CD4-positive, alpha-beta T cell (primary cell): ENCODE measurements at regions of chr5 and their contacts with region 1.

Region 1: DNA sequence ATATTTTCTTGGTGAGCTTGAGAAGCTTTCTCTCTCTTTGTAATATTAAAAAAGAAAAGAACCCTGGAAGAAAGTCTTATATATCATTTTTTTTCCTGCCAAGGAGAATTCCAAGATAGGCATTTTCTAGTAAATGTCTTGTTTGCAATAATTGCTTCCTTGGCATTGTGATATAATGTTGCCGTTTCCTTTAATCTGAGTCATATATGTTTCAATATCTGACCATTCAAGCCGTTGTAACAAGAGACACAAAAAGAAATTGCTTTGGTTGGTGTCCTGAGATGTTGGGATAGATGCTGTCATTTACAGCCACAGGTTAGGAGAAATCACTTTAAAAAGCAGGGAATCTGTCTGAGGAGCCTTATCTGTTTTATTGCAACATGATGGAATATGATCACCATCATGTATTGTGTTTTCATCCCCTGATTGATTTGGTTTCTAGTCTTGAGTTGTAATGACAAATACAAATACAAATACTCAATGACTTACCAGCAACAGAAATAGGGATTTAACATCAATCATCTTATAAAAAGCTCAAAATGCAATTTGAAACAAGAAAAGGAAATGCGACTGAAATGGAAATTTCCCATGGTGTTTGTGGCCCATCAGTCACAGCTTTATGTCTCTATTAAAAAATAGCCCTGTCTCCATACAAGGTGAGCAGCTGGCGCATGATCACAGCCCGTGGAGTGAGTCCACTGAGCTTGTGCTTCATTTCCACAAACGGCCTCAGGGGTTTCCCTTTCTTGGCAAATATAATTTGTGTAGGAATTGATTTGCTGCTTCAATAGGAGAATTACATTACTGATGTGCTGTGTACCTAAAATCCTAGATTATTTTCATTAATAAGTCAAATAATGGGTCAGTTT is 250.1 kb upstream of the TRPC7 start:
- DNase-seq: no peak
- ATAC-seq: no peak
- H3K4me3 ChIP-seq: no peak overlapping the region
- H3K4me3 Mint-ChIP-seq: no peak overlapping the region
- H3K27ac ChIP-seq: no peak overlapping the region
- H3K27ac Mint-ChIP-seq: no peak overlapping the region
- H3K4me1 ChIP-seq: no peaks in the 10 kb centered on the region
- H3K4me1 Mint-ChIP-seq: no peaks in the 10 kb centered on the region
- H3K27me3 ChIP-seq: no peaks in the 10 kb centered on the region
- H3K27me3 Mint-ChIP-seq: no peaks in the 10 kb centered on the region
- CTCF ChIP-seq: no peak

Region 2: DNA sequence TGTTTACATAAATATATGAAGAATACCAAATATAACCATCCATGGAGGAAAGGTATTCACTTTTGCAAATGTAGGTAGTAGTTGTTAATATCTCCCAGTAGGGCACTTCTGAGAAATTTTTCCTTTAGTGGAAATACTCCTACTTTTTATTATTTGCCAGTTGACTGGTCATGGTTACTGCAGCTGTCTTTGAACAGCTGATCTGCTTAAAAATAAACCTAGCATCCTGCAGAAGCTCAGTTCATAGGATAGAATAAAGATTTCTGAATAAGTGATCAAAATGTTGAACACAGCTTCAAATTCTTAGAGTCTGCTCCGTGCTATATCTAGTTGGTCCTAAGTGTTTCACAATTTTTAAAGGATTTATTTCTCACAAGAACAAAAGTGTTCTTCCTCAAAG is 20.5 kb after region 1 on chr5:
- CTCF ChIA-PET with region 1: no interaction called
- POLR2A ChIA-PET with region 1: no interaction called
- intact Hi-C with region 1: loop called in 1 of 2 experiments (anchors 2 kb)
- DNase-seq: no peak
- ATAC-seq: no peak
- H3K4me3 ChIP-seq: no peak overlapping the region
- H3K4me3 Mint-ChIP-seq: no peak overlapping the region
- H3K27ac ChIP-seq: no peak overlapping the region
- H3K27ac Mint-ChIP-seq: no peak overlapping the region
- H3K4me1 ChIP-seq: no peaks in the 10 kb centered on the region
- H3K4me1 Mint-ChIP-seq: no peaks in the 10 kb centered on the region
- H3K27me3 ChIP-seq: no peaks in the 10 kb centered on the region
- H3K27me3 Mint-ChIP-seq: no peaks in the 10 kb centered on the region
- CTCF ChIP-seq: no peak

Region 3: GRCh38 chr5:136723806-136724583 is 108.5 kb after region 1 on chr5:
- CTCF ChIA-PET with region 1: no interaction called
- POLR2A ChIA-PET with region 1: no interaction called
- intact Hi-C with region 1: no loop called
- DNase-seq: no peak
- ATAC-seq: no peak
- H3K4me3 ChIP-seq: no peak overlapping the region
- H3K4me3 Mint-ChIP-seq: no peak overlapping the region
- H3K27ac ChIP-seq: no peak overlapping the region
- H3K27ac Mint-ChIP-seq: no peak overlapping the region
- H3K4me1 ChIP-seq: no peaks in the 10 kb centered on the region
- H3K4me1 Mint-ChIP-seq: no peaks in the 10 kb centered on the region
- H3K27me3 ChIP-seq: no peaks in the 10 kb centered on the region
- H3K27me3 Mint-ChIP-seq: no peaks in the 10 kb centered on the region
- CTCF ChIP-seq: no peak

Region 4: GRCh38 chr5:136840601-136841000 is 225.1 kb after region 1 on chr5:
- CTCF ChIA-PET with region 1: no interaction called
- POLR2A ChIA-PET with region 1: no interaction called
- intact Hi-C with region 1: no loop called
- DNase-seq: no peak
- ATAC-seq: no peak
- H3K4me3 ChIP-seq: no peak overlapping the region
- H3K4me3 Mint-ChIP-seq: no peak overlapping the region
- H3K27ac ChIP-seq: no peak overlapping the region
- H3K27ac Mint-ChIP-seq: no peak overlapping the region
- H3K4me1 ChIP-seq: no peaks in the 10 kb centered on the region
- H3K4me1 Mint-ChIP-seq: no peaks in the 10 kb centered on the region
- H3K27me3 ChIP-seq: no peaks in the 10 kb centered on the region
- H3K27me3 Mint-ChIP-seq: no peaks in the 10 kb centered on the region
- CTCF ChIP-seq: no peak